OCI-LY7 (cell line): ENCODE measurements at regions of chr3 and their contacts with region 1.

Region 1: GRCh38 chr3:9503283-9503682 is 50.3 kb downstream of the LHFPL4 start:
- DNase-seq: peak; percentile 83
- H3K4me3 ChIP-seq: no peak overlapping the region
- H3K27ac ChIP-seq: no peak overlapping the region
- H3K4me1 ChIP-seq: peaks cover 6% of the 10 kb centered on the region
- CTCF ChIP-seq: peak; percentile 96

Region 2: GRCh38 chr3:9623148-9623547 is 119.9 kb after region 1 on chr3:
- CTCF ChIA-PET with region 1: no interaction called
- POLR2A ChIA-PET with region 1: no interaction called
- intact Hi-C with region 1: no loop called
- DNase-seq: no peak
- H3K4me3 ChIP-seq: no peak overlapping the region
- H3K27ac ChIP-seq: no peak overlapping the region
- H3K4me1 ChIP-seq: no peaks in the 10 kb centered on the region
- CTCF ChIP-seq: no peak

Region 3: DNA sequence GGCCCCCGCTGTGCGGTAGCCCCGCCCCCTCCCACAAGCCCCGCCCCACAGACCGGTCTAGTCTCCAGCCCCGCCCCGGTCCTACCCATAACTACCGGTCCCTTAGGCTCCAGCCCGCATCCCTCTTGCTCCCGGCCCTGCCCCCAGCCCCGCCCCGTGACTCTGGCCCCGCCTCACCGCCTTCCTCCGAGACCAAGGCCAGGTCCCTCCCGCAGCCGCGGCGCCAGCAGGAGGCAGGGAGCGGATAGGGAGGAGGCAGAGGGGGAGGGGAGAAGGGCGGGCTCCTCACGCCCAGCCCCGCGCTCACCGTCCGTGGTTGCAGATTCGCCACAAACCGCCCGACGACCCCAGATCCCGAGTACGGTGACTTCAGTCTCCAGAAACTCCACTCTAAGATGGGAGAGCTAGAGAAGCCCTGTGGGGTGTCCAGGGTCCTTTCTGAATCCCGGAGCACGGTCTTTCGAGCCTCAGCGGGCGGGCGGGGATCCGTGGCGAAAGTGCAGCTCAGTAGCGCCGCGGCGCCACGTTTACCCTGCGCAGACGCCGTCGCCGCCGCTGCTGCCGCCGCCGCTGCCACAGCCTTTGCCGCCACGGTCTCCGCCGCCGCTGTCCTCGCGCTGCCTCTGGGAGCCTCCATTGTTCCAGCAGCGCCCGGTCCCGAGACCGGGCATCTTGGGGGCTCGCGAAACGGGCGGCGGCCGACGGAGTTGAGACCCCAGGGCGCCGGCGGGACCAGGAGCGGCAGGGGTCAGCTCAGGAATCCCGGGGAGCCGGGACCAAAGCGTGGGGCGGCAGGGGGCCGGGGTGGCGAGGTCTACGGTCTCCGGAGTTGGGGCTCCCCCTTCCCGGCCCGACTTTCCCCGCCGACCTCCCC is 228.2 kb after region 1 on chr3 and contains the start of gene BRPF1:
- CTCF ChIA-PET with region 1: interaction called, 5 read pairs
- POLR2A ChIA-PET with region 1: no interaction called
- intact Hi-C with region 1: loop called (anchors 1 kb)
- DNase-seq: peak; percentile 98
- H3K4me3 ChIP-seq: peak within 1 kb of the TSS; percentile 96
- H3K27ac ChIP-seq: peak within 1 kb of the TSS; percentile 60
- H3K4me1 ChIP-seq: peaks cover 28% of the 10 kb centered on the region
- CTCF ChIP-seq: no peak
- total RNA-seq, gene BRPF1: 29.2 and 31.9 TPM in 2 replicates